Ovary (tissue), 10 donors: ENCODE measurements at regions of chr4 and their contacts with region 1.

Region 1: GRCh38 chr4:13092702-13093101 is 391.4 kb downstream of the RAB28 start:
- DNase-seq: no peak
- H3K4me3 ChIP-seq: no peak overlapping the region
- H3K27ac ChIP-seq: no peak overlapping the region
- H3K4me1 ChIP-seq: no peaks in the 10 kb centered on the region
- H3K27me3 ChIP-seq: no peaks in the 10 kb centered on the region
- CTCF ChIP-seq: no peak
- EP300 ChIP-seq: no peak
- POLR2A ChIP-seq: no peak

Region 2: GRCh38 chr4:12005471-12005870 is 1087.2 kb before region 1 on chr4:
- intact Hi-C with region 1: loop called in 1 of 4 experiments (anchors 5 kb)
- DNase-seq: no peak
- H3K4me3 ChIP-seq: no peak overlapping the region
- H3K27ac ChIP-seq: no peak overlapping the region
- H3K4me1 ChIP-seq: no peaks in the 10 kb centered on the region
- H3K27me3 ChIP-seq: no peaks in the 10 kb centered on the region
- CTCF ChIP-seq: no peak
- EP300 ChIP-seq: no peak
- POLR2A ChIP-seq: no peak

Region 3: GRCh38 chr4:13108096-13108495 is 15.4 kb after region 1 on chr4:
- intact Hi-C with region 1: no loop called
- DNase-seq: no peak
- H3K4me3 ChIP-seq: no peak overlapping the region
- H3K27ac ChIP-seq: no peak overlapping the region
- H3K4me1 ChIP-seq: no peaks in the 10 kb centered on the region
- H3K27me3 ChIP-seq: no peaks in the 10 kb centered on the region
- CTCF ChIP-seq: no peak
- EP300 ChIP-seq: no peak
- POLR2A ChIP-seq: no peak